ENCODE measurements at regions of chr13 and their contacts with region 1.

Region 1: GRCh38 chr13:48233046-48233907 is at the start of gene ITM2B:
- DNase-seq: peak; percentile 64
- H3K4me3 ChIP-seq: peak within 1 kb of the TSS; percentile 89 to 99 (median 99)
- H3K27ac ChIP-seq: peak within 1 kb of the TSS; percentile 92
- H3K4me1 ChIP-seq: peaks cover 27% of the 10 kb centered on the region
- H3K27me3 ChIP-seq: no peaks in the 10 kb centered on the region
- CTCF ChIP-seq: peak in 1 of 2 donors; percentile 45
- total RNA-seq, gene ITM2B: 187 to 317 TPM

Region 2: DNA sequence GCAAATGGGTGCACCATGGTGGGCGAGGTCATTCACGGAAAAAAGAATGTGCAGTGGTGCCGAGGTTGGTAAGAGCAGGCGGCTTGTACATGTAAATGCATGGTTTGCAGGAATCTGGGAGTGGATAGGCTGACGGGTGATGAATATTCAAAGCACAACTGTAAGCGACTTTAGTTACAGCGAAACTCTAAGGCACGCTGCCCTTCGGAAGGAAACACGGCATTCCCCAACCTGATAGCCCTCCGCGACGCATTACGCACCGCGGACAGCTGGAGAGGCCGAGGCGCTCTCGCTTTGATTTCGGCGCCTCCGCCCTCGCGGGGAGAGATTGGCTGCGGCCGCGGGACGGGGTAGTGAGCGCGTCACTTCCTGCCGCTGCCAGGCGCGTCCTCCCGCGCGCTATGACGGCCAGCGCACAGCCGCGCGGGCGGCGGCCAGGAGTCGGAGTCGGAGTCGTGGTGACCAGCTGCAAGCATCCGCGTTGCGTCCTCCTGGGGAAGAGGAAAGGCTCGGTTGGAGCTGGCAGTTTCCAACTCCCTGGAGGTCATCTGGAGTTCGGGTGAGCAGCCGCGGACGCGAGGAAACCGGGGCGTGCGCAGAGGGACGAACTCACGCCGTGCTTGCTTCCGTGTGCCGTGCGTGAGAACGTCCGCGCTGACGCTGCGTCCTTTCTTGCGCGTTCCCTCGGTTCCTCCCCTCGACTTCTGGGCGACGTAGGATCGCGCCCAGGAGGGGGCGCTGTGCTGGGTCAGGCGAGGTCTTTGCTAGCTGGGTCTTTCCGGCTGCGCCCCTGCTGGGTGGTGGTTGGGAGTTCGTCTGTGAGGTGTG is 195.7 kb before region 1 on chr13 and contains the start of gene NUDT15:
- CTCF ChIA-PET with region 1: no interaction called
- dilution Hi-C with region 1: no loop called
- in situ Hi-C with region 1: no loop called
- intact Hi-C with region 1: loop called (anchors 5 kb)
- DNase-seq: peak; percentile 96
- H3K4me3 ChIP-seq: peak within 1 kb of the TSS; percentile 55 to 73 (median 64)
- H3K27ac ChIP-seq: peak within 1 kb of the TSS; percentile 92
- H3K4me1 ChIP-seq: peaks cover 20% of the 10 kb centered on the region
- H3K27me3 ChIP-seq: no peaks in the 10 kb centered on the region
- CTCF ChIP-seq: peak; percentile 98 to 99
- total RNA-seq, gene NUDT15: 12.0 to 30.2 TPM

Region 3: DNA sequence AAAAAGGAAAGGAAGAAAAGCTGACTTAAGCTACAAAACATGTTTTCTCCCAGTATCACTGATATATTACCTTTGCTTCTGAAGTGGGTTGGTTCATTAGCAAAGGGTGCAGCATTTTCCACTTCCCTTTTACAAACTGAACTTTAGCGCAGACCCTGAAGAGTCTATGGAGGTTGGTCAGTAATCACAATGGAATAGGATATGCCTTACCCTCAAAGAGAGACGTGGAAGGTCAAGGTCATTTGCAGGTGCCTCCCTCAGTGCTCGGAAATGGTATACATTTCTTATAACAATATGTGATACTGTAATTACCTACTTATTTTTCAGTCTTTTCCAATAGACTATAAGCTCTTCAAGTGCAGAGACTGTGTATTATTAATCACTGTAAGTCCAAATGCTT is 116.5 kb before region 1 on chr13:
- CTCF ChIA-PET with region 1: no interaction called
- dilution Hi-C with region 1: no loop called
- in situ Hi-C with region 1: no loop called
- intact Hi-C with region 1: no loop called
- DNase-seq: no peak
- H3K4me3 ChIP-seq: no peak overlapping the region
- H3K27ac ChIP-seq: no peak overlapping the region
- H3K4me1 ChIP-seq: peaks cover 16% of the 10 kb centered on the region
- H3K27me3 ChIP-seq: no peaks in the 10 kb centered on the region
- CTCF ChIP-seq: no peak

Region 4: DNA sequence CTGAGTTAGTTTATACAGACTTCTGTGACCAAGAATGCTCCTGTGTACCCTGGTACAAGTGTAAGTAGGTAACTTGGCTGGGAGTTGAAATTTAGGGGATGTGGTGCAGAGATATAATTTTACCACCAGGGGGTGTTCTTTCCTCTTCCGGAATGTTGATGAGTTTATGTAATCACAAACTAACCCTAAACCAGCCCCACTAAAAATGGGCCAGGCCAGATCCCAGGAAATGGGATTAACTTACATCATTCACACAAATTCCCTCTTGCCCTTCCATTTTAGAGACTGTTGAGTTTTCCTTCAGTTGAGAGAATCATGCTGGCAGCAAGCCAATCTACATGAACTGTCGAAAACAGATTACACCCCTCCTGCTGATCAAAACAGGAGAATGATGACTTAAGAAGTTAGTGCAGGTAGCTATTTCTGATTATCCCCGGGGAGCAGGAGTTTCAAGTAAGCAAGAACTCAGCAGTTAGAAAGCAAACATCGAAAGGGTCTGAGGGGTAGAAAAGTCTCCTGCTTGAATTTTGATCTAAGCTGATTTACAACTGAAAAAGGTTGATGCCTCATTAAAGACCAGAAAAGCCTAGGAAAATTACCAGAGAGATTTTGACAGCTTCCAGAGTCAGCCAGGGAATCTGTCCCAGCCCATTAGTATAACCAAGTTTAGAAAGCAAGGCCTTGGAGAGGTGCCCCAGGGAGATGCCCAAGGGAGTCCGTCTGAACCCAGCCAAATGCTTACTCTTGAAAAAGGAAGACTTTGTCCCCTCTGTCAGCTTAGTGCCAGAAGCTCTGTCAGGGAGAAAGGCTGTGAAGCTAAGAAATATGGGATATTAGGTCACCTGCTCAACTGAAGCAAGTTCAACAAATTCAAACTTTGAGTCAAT is 106.1 kb before region 1 on chr13:
- CTCF ChIA-PET with region 1: interaction called, 9 read pairs
- dilution Hi-C with region 1: no loop called
- in situ Hi-C with region 1: loop called in 1 of 2 experiments (anchors 5 kb)
- intact Hi-C with region 1: loop called (anchors 1 kb)
- DNase-seq: peak; percentile 67
- H3K4me3 ChIP-seq: no peak overlapping the region
- H3K27ac ChIP-seq: peak overlapping the region; percentile 29
- H3K4me1 ChIP-seq: peaks cover 24% of the 10 kb centered on the region
- H3K27me3 ChIP-seq: no peaks in the 10 kb centered on the region
- CTCF ChIP-seq: peak; percentile 61 to 72

Region 5: GRCh38 chr13:48303359-48304142 is 70.3 kb after region 1 on chr13 and contains the start of gene RB1:
- CTCF ChIA-PET with region 1: no interaction called
- dilution Hi-C with region 1: no loop called
- in situ Hi-C with region 1: no loop called
- intact Hi-C with region 1: loop called (anchors 2 kb)
- DNase-seq: peak; percentile 94
- H3K4me3 ChIP-seq: peak within 1 kb of the TSS; percentile 65 to 99 (median 86)
- H3K27ac ChIP-seq: peak within 1 kb of the TSS; percentile 97
- H3K4me1 ChIP-seq: peaks cover 18% of the 10 kb centered on the region
- H3K27me3 ChIP-seq: no peaks in the 10 kb centered on the region
- CTCF ChIP-seq: peak in 1 of 2 donors; percentile 1
- total RNA-seq, gene RB1: 34.7 to 48.6 TPM

Region 6: GRCh38 chr13:48505597-48506091 is 272.4 kb after region 1 on chr13:
- CTCF ChIA-PET with region 1: no interaction called
- dilution Hi-C with region 1: no loop called
- in situ Hi-C with region 1: no loop called
- intact Hi-C with region 1: loop called (anchors 10 kb)
- DNase-seq: peak; percentile 51
- H3K4me3 ChIP-seq: no peak overlapping the region
- H3K27ac ChIP-seq: peak overlapping the region; percentile 53
- H3K4me1 ChIP-seq: peaks cover 54% of the 10 kb centered on the region
- H3K27me3 ChIP-seq: no peaks in the 10 kb centered on the region
- CTCF ChIP-seq: no peak